ENCODE measurements at regions of chr19 and their contacts with region 1.

Region 1: GRCh38 chr19:38142176-38143035 is 81.6 kb downstream of the DPF1 start:
- DNase-seq: peak; percentile 54 to 81 (median 61)
- H3K4me3 ChIP-seq: no peak overlapping the region
- H3K27ac ChIP-seq: no peak overlapping the region
- H3K4me1 ChIP-seq: no peaks in the 10 kb centered on the region
- H3K27me3 ChIP-seq: no peaks in the 10 kb centered on the region
- CTCF ChIP-seq: peak in 2 of 3 donors; percentile 35 to 43
- EP300 ChIP-seq: no peak
- POLR2A ChIP-seq: no peak

Region 2: DNA sequence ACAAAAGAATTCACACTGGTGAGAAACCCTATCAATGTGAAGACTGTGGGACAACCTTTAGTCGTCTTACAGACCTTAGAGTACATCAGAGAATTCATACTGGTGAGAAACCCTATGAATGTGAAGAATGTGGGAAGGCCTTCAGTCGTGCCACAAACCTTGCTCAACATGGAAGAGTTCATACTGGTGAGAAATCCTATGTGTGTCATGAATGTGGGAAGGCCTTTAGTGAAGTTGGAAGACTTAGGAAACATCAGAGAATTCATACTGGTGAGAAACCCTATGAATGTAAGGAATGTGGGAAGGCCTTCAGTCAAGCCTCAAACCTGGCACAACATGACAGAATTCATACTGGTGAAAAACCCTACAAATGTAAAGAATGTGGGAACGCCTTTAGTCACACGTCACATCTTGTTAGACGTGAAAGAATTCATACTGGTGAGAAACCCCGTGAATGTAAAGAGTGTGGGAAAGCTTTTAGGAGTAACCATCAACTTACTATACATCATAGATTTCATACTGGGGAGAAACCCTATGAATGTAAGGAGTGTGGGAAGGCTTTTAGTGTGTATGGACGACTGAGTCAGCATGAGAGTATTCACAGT is 339.1 kb before region 1 on chr19:
- intact Hi-C with region 1: no loop called
- DNase-seq: no peak
- H3K4me3 ChIP-seq: no peak overlapping the region
- H3K27ac ChIP-seq: no peak overlapping the region
- H3K4me1 ChIP-seq: no peaks in the 10 kb centered on the region
- H3K27me3 ChIP-seq: no peaks in the 10 kb centered on the region
- CTCF ChIP-seq: no peak
- EP300 ChIP-seq: no peak
- POLR2A ChIP-seq: no peak

Region 3: DNA sequence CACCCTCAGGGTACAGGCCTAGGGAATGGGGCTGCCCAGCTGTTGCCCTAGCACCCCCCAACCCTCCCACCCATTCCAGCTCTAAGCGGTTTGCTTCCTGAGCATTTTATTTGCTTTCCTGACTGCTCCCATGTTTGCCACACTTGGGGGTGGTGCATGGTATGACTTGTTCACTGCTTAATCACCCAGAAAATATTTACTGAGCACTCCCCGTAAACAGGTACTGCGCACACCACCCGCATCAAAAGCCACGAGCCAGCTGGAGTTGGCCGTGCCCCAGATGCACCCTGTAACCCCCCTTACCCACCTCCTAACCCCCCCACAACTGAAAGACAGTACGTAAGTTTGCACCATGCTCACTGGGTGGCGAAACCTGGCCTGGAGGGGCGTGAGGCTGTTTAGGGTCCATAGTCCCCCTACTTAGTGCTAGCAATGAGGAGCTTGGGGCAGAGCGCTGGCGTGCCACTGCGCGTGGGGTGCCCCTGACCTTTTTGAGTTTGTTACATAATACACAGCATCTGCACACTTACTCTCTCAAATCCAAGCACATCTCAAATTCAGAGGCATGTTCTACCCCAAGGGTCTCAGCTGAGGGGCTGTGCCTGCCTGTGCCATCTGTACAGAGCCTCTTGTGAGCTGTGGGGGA is 51.8 kb after region 1 on chr19:
- intact Hi-C with region 1: no loop called
- DNase-seq: no peak
- H3K4me3 ChIP-seq: no peak overlapping the region
- H3K27ac ChIP-seq: no peak overlapping the region
- H3K4me1 ChIP-seq: no peaks in the 10 kb centered on the region
- H3K27me3 ChIP-seq: no peaks in the 10 kb centered on the region
- CTCF ChIP-seq: no peak
- EP300 ChIP-seq: no peak
- POLR2A ChIP-seq: no peak

Region 4: DNA sequence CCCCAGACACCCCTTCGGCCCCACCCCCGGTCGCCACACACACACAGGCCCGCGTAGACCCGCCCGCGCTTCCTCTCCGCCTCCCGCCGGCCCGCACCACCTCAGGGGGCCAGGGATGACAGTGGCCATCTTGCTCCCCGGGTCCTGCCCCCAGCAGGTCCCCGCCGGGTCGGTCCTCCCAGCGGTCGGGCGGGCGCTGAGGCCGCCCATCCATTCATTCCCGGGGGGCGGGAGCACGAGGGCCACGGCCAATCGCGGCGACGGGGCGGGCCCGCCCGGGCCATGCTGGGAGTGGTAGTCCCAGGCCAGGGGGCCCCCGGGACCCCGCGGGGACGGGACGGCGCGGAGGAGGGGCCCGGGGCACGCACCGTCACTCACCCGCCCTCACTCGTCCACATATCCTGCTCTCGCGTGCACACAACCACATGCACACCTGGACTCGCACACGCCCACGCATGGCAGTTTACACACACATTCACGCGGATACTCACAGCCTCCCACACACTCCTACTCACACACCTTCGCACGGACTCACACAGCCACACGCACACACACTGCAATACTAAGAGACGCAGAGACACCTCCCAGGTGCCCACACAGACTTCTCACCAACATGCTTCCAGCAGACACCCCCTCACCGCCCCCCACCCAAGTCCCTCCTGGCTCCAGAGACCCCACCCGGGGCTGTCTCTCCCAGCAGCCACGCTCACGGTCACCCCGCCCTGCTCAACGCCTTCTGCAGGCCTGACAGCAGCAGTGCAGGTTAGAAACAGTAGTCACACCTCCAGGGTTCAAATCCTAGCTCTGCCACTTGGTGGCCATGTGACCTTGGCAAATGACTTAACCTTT is 81.8 kb after region 1 on chr19 and contains the start of gene DPF1:
- intact Hi-C with region 1: loop called in 1 of 4 experiments (anchors 10 kb)
- DNase-seq: no peak
- H3K4me3 ChIP-seq: no peak within 1 kb of the TSS
- H3K27ac ChIP-seq: no peak within 1 kb of the TSS
- H3K4me1 ChIP-seq: no peaks in the 10 kb centered on the region
- H3K27me3 ChIP-seq: no peaks in the 10 kb centered on the region
- CTCF ChIP-seq: no peak
- EP300 ChIP-seq: no peak
- POLR2A ChIP-seq: no peak
- total RNA-seq, gene DPF1: 0.23 to 1.0 (median 0.35) TPM in 5 of 7 donors, not detected in the others

Region 5: DNA sequence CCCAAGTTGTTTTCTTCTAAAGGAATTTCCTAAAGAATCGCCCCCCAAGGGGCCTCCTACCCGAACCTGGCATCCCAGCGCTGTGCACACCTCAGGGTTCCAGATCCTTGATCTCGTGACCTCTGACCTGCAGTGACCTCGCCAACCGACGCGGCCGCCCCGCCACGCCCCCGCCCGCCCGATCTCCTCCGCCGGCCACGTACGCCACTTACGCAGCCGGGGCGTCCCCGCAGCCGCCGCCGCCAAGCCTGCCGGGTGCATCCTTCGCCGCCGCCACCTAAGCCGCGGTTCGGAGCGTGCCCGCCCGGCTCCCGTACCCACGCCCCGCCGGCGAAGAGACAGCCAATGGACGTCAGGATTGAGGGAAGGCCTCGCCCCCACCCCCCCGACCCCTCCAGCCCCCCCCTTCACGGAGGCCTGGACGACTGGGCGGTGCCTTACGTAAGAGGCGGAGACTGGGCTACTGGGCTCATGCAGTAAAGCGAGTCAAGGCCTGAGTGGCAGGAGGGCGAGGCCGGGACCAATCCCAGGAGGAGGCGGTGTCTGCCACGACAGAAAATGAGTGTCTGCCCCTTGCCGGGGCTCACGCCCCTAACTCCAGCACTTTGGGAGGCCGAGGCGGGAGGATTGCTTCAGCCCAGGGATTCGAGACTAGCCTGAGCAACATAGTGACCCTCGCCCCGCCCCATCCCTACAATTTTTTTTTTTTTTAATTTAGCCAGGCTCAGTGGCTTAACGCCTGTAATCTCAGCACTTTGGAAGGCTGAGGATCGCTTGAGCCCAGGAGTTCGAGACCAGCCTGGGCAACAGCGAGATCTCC is 173.5 kb after region 1 on chr19 and contains the start of gene YIF1B:
- intact Hi-C with region 1: loop called in 1 of 4 experiments (anchors 10 kb)
- DNase-seq: peak; percentile 94 to 96 (median 96)
- H3K4me3 ChIP-seq: peak within 1 kb of the TSS; percentile 47
- H3K27ac ChIP-seq: peak within 1 kb of the TSS; percentile 43 to 85
- H3K4me1 ChIP-seq: peaks cover 1% of the 10 kb centered on the region
- H3K27me3 ChIP-seq: no peaks in the 10 kb centered on the region
- CTCF ChIP-seq: no peak
- EP300 ChIP-seq: no peak
- POLR2A ChIP-seq: no peak
- total RNA-seq, gene YIF1B: 8.5 to 37.2 (median 21.8) TPM

Measured in ovary (tissue), 10 donors.